GM12878 (cell line): ENCODE measurements at regions of chr18 and their contacts with region 1.

Region 1: DNA sequence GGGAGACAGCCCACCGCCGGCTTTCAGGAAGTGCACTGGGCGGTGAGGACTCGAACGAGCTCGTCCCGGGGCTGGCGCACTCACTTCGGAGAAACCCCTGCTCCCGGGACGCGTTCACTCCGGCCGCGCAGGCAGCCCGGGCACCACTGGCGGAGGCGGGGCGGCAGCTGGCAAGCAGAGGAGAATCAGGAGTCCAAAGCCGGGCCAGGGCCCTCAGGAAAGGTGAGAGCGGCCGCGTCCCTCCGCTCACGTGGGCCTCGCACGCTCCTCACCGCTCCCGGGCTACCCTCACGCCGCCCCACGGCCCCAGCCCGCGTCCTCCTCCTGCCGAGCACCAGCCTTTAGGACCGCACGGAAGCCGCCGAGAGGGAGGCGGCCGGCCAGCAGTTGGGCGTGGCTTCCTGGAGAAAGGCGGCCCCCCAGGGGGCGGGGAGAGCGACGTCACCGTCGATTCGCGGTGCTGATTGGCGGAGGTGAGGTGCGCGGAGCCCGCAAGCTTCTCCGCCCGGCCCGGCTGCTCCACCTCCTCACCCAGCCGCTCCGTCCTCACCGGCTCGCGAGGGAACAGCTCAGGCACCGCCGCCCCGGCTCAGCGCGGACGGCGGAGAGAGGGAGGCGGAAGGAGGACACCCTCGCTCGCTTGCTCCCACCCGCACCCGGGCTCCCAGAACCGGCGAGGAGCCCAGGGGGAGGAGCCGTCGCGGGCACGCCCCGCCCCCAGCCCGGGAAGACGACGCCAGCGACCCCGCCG is at the start of gene ZCCHC2:
- DNase-seq: peak; percentile 90
- ATAC-seq: peak; percentile 75
- H3K4me3 ChIP-seq: peak within 1 kb of the TSS; percentile 74
- H3K27ac ChIP-seq: peak within 1 kb of the TSS; percentile 66
- H3K4me1 ChIP-seq: no peaks in the 10 kb centered on the region
- H3K27me3 ChIP-seq: peaks cover 0 to 3% of the 10 kb centered on the region in 2 experiments; a peak in 2 of 4 replicates
- CTCF ChIP-seq: no peak
- EP300 ChIP-seq: no peak
- POLR2A ChIP-seq: peak; percentile 90
- RAD21 ChIP-seq: no peak
- polyA plus RNA-seq, gene ZCCHC2: 1.7 to 2.7 TPM

Region 2: DNA sequence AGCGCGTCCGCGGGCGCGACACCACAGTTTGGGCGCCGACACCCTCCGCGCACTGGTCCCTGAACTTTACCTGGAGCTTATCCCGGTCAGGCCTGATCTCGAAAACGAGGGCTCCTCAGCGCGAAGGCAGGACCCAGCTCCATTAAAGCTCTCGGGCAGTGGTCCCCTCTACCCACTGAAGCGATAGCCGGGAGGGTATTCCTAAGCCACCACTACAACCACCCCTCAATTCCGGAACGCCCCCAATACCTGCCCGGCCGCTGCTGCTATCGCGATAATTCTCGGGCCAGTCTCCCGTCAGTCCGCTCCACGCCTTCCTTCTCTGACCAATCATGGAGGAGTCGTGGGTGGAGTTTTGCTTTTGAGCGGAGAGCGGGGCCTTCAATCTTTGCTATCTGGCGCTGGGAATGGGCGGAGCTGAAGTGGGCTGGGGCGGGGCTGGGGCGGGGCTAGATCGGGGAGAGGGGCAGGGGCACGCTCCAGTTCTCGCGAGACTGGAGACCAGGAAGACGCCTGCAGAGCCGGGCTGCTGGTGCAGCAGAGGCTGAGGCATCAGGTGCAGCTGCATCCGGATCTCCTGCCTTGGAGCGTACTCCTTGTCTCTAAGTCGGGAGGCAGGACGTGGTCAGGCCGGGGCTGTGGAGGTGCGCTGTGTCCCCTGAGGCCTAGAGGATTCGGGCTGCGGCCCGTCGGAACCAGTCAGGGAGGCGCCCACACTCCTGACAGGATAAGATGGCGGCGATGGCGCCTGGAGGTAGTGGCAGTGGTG is 335.7 kb before region 1 on chr18 and contains the starts of genes PIGN and RELCH:
- CTCF ChIA-PET with region 1: no interaction called
- POLR2A ChIA-PET with region 1: no interaction called
- RAD21 ChIA-PET with region 1: no interaction called
- SMC1A ChIA-PET with region 1: no interaction called
- in situ Hi-C with region 1: no loop called
- intact Hi-C with region 1: loop called (anchors 5 kb)
- DNase-seq: peak; percentile 92
- ATAC-seq: peak; percentile 90
- H3K4me3 ChIP-seq: peak within 1 kb of the TSS; percentile 99
- H3K27ac ChIP-seq: peak within 1 kb of the TSS; percentile 91
- H3K4me1 ChIP-seq: peaks cover 3% of the 10 kb centered on the region
- H3K27me3 ChIP-seq: no peaks in the 10 kb centered on the region
- CTCF ChIP-seq: no peak
- EP300 ChIP-seq: no peak
- POLR2A ChIP-seq: peak; percentile 98
- RAD21 ChIP-seq: no peak
- polyA plus RNA-seq, gene PIGN: 6.9 to 12.3 TPM
- polyA plus RNA-seq, gene RELCH: 3.1 to 3.4 TPM

Region 3: GRCh38 chr18:62399781-62400308 is 122.8 kb before region 1 on chr18:
- CTCF ChIA-PET with region 1: no interaction called
- POLR2A ChIA-PET with region 1: no interaction called
- RAD21 ChIA-PET with region 1: no interaction called
- SMC1A ChIA-PET with region 1: no interaction called
- in situ Hi-C with region 1: no loop called
- intact Hi-C with region 1: no loop called
- DNase-seq: no peak
- ATAC-seq: peak; percentile 78
- H3K4me3 ChIP-seq: no peak overlapping the region
- H3K27ac ChIP-seq: no peak overlapping the region
- H3K4me1 ChIP-seq: no peaks in the 10 kb centered on the region; the same call in 1 of the 2 replicates
- H3K27me3 ChIP-seq: no peaks in the 10 kb centered on the region
- CTCF ChIP-seq: peak; percentile 21 to 36 (median 23); a peak in 4 of 6 replicates
- EP300 ChIP-seq: no peak
- POLR2A ChIP-seq: no peak
- RAD21 ChIP-seq: no peak

Region 4: GRCh38 chr18:62437235-62438017 is 85.3 kb before region 1 on chr18:
- CTCF ChIA-PET with region 1: no interaction called
- POLR2A ChIA-PET with region 1: no interaction called
- RAD21 ChIA-PET with region 1: no interaction called
- SMC1A ChIA-PET with region 1: no interaction called
- in situ Hi-C with region 1: no loop called
- intact Hi-C with region 1: no loop called
- DNase-seq: no peak
- ATAC-seq: peak; percentile 56; the same call in 2 of the 3 replicates
- H3K4me3 ChIP-seq: no peak overlapping the region
- H3K27ac ChIP-seq: no peak overlapping the region
- H3K4me1 ChIP-seq: no peaks in the 10 kb centered on the region
- H3K27me3 ChIP-seq: no peaks in the 10 kb centered on the region; a peak in 1 of 4 replicates
- CTCF ChIP-seq: no peak
- EP300 ChIP-seq: no peak
- POLR2A ChIP-seq: no peak
- RAD21 ChIP-seq: no peak

Region 5: DNA sequence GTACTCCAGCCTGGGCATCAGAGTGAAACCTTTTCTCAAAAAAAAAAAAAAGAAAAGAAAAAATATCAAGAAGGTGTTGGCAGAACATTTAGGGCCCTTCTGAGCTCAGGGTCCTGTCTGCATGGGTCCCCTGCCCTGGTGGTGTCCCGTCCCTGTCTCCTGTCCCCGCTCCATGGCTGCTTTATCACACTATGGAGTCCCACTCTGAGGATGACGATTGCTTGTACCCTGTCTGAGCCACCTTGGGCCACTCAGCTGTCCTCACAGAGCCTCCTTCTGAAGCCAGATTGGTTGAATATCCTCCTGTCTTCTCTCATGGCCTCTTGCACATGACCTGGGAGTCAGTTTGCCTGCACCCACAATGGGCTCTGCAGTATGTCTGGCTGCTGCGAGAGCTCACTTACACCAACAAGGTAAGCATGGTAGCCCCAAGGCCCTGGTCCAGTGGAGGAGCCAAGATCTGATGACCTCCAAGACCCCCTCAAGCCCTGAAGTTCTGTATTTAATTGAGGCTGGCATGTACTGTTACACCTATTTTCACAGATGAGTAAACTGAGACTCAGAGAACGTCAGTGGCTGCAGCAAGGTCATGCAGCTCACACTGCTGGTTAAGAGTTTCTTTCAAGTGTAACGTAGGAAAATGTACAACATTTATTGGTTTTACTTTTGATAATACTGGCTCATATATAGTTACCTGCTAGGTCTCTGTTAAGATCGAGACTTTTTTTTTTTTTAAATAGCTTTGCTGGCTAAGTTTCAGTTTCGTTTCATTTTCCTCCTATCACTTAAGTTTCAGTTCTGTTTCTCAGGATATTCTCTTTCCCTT is 16.8 kb before region 1 on chr18:
- CTCF ChIA-PET with region 1: interaction called, 11 read pairs
- POLR2A ChIA-PET with region 1: interaction called, 22 read pairs
- RAD21 ChIA-PET with region 1: interaction called, 12 read pairs
- SMC1A ChIA-PET with region 1: interaction called, 19 read pairs
- in situ Hi-C with region 1: no loop called
- intact Hi-C with region 1: loop called (anchors 2 kb)
- DNase-seq: peak; percentile 78
- ATAC-seq: peak; percentile 95
- H3K4me3 ChIP-seq: peak overlapping the region; percentile 46; the same call in 1 of the 2 replicates
- H3K27ac ChIP-seq: peak overlapping the region; percentile 90
- H3K4me1 ChIP-seq: peaks cover 19% of the 10 kb centered on the region
- H3K27me3 ChIP-seq: no peaks in the 10 kb centered on the region; a peak in 1 of 4 replicates
- CTCF ChIP-seq: no peak
- EP300 ChIP-seq: no peak
- POLR2A ChIP-seq: no peak
- RAD21 ChIP-seq: no peak

Region 6: GRCh38 chr18:63422087-63422809 is 899.6 kb after region 1 on chr18 and contains the start of gene VPS4B:
- CTCF ChIA-PET with region 1: no interaction called
- POLR2A ChIA-PET with region 1: no interaction called
- RAD21 ChIA-PET with region 1: no interaction called
- SMC1A ChIA-PET with region 1: no interaction called
- in situ Hi-C with region 1: no loop called
- intact Hi-C with region 1: loop called (anchors 10 kb)
- DNase-seq: peak; percentile 98
- ATAC-seq: peak; percentile 97
- H3K4me3 ChIP-seq: peak within 1 kb of the TSS; percentile 90
- H3K27ac ChIP-seq: peak within 1 kb of the TSS; percentile 94
- H3K4me1 ChIP-seq: no peaks in the 10 kb centered on the region
- H3K27me3 ChIP-seq: no peaks in the 10 kb centered on the region
- CTCF ChIP-seq: no peak
- EP300 ChIP-seq: no peak
- POLR2A ChIP-seq: peak; percentile 90
- RAD21 ChIP-seq: no peak
- polyA plus RNA-seq, gene VPS4B: 25.7 to 29.9 TPM